ENCODE measurements at regions of chr19 and their contacts with region 1.

Region 1: GRCh38 chr19:45643024-45643926 is 4.1 kb upstream of the EML2 start:
- DNase-seq: peak; percentile 87 to 92
- ATAC-seq: peak; percentile 10 to 31 (median 14)
- H3K4me3 ChIP-seq: peak overlapping the region; percentile 9
- H3K4me3 Mint-ChIP-seq: peak overlapping the region; percentile 75
- H3K27ac ChIP-seq: peak overlapping the region; percentile 98
- H3K27ac Mint-ChIP-seq: peak overlapping the region; percentile 91 to 96
- H3K4me1 ChIP-seq: peaks cover 71% of the 10 kb centered on the region
- H3K4me1 Mint-ChIP-seq: peaks cover 47 to 71% of the 10 kb centered on the region in 2 donors
- H3K27me3 ChIP-seq: no peaks in the 10 kb centered on the region
- H3K27me3 Mint-ChIP-seq: no peaks in the 10 kb centered on the region
- CTCF ChIP-seq: peak; percentile 95

Region 2: GRCh38 chr19:45405435-45406225 is 237.6 kb before region 1 on chr19:
- intact Hi-C with region 1: loop called (anchors 10 kb)
- DNase-seq: peak; percentile 71 to 88
- ATAC-seq: peak; percentile 64 to 79 (median 70)
- H3K4me3 ChIP-seq: peak overlapping the region; percentile 67
- H3K4me3 Mint-ChIP-seq: peak overlapping the region; percentile 97
- H3K27ac ChIP-seq: peak overlapping the region; percentile 84
- H3K27ac Mint-ChIP-seq: peak overlapping the region; percentile 86 to 92
- H3K4me1 ChIP-seq: peaks cover 35% of the 10 kb centered on the region
- H3K4me1 Mint-ChIP-seq: peaks cover 33 to 37% of the 10 kb centered on the region in 2 donors
- H3K27me3 ChIP-seq: peaks cover 25% of the 10 kb centered on the region
- H3K27me3 Mint-ChIP-seq: peaks cover 10 to 14% of the 10 kb centered on the region in 2 donors
- CTCF ChIP-seq: no peak

Region 3: DNA sequence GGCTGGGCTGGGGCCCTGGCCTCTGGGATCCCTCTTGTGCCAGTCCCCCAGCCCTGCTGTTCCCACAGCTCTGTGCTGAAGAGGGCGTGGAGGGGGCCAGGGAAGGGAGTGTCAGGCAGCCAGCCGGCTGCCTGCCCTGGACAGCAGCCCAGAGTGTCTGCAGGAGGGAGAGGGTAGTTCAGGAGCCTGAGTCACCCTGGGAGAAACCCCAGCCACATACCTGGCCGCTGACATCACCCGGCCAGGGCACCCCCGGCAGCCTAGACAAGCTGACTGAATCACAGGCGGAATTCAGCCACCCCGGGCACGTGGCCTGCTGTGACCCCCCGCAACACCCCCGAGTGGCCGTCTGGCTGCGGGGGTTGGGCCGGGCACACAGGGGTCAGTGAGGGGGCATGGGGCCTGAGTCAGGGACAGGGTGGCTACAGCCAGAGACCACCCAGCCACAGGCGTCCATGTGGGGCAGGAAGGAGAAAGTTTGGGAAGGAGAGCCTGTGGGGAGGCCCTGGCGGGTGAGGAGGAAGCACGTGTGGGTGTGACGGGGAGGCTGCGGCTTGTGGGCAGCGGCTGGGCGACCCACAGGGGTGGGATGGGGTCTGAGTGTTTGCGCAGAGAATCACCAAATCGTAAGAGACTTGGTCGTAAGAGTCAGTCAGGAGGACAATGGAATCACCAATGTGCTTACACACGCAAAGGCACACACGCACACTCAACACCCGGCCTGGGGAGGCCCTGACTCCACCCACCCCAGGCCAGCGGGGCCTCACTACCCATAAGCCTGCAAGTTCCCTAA is 187.4 kb before region 1 on chr19:
- intact Hi-C with region 1: loop called (anchors 10 kb)
- DNase-seq: peak; percentile 84 to 88
- ATAC-seq: peak; percentile 60 to 77 (median 72)
- H3K4me3 ChIP-seq: no peak overlapping the region
- H3K4me3 Mint-ChIP-seq: peak overlapping the region; percentile 47
- H3K27ac ChIP-seq: peak overlapping the region; percentile 74
- H3K27ac Mint-ChIP-seq: peak overlapping the region; percentile 92 to 98
- H3K4me1 ChIP-seq: peaks cover 40% of the 10 kb centered on the region
- H3K4me1 Mint-ChIP-seq: peaks cover 42 to 52% of the 10 kb centered on the region in 2 donors
- H3K27me3 ChIP-seq: no peaks in the 10 kb centered on the region
- H3K27me3 Mint-ChIP-seq: peaks cover 0 to 4% of the 10 kb centered on the region in 2 donors
- CTCF ChIP-seq: no peak

Region 4: DNA sequence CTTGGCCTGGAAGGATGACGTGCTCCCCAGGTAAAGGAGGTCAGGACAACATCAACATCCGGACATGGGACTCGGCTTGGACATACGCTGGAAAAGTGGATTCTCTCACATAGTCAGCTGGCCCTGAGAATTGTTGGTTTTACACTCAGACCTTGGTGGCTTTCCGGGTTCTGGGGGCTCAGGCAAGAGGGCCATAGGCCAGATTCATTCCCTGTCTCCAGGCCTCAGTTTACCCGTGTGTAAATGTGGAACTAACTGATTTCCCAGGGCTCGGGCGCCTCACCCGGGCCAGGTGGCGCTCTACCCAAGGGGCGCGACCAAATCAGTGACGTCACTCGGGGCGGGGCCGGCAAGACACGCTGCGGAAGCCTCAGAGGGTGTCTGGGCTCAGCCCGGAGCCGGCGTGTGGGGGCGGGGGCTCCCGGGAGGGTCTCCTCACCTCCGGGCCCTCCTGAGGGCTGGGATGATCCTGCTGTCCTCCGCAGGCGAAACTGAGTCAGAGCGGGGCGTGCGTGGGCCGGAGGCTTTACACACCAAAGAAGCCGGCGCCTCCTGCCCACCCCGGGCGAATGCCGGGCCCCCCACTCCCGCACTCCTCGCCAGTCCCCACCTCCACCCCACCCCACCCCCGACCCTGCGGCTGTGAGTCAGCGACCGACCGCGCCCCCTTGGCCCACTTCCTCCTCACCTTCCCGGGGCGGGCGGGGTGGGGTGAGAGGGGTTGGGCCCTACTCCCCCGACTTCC is 136.9 kb before region 1 on chr19:
- intact Hi-C with region 1: loop called (anchors 1 kb)
- DNase-seq: peak; percentile 97 to 98
- ATAC-seq: peak; percentile 74 to 89 (median 78)
- H3K4me3 ChIP-seq: peak overlapping the region; percentile 98
- H3K4me3 Mint-ChIP-seq: peak overlapping the region; percentile 92
- H3K27ac ChIP-seq: peak overlapping the region; percentile 93
- H3K27ac Mint-ChIP-seq: peak overlapping the region; percentile 81 to 97
- H3K4me1 ChIP-seq: peaks cover 40% of the 10 kb centered on the region
- H3K4me1 Mint-ChIP-seq: peaks cover 28 to 40% of the 10 kb centered on the region in 2 donors
- H3K27me3 ChIP-seq: no peaks in the 10 kb centered on the region
- H3K27me3 Mint-ChIP-seq: no peaks in the 10 kb centered on the region
- CTCF ChIP-seq: peak; percentile 53

Region 5: DNA sequence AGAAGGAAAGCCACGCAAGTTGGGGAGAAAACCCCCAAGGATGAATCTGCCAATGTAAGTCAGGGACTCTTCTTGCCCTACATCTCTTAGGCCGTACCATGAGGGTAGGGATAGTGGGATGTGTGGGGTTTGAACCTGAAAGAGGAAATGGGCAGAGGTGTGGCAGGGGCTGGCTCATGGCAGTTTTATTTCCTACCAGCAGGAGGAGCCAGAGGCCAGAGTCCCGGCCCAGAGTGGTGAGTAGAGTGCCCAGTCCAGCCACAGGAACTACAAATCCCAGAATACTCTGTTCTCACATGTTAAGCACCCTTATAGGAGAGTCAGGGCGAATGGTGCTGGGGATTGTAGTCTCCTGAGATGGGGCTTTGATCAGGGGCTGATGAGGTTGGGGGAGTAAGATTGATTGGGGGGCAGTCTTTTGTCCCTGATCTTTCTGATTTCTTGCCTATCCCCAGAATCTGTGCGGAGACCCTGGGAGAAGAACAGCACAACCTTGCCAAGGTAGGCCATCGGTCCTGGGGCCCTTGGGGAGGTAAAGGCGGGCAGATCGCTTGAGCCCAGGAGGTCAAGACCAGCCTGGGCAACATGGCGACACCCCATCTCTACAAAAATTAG is 119.5 kb before region 1 on chr19:
- intact Hi-C with region 1: loop called (anchors 2 kb)
- DNase-seq: peak; percentile 70 to 90
- ATAC-seq: peak; percentile 99 to 100 (median 99)
- H3K4me3 ChIP-seq: no peak overlapping the region
- H3K4me3 Mint-ChIP-seq: no peak overlapping the region
- H3K27ac ChIP-seq: peak overlapping the region; percentile 13
- H3K27ac Mint-ChIP-seq: peak overlapping the region; percentile 75 to 78
- H3K4me1 ChIP-seq: peaks cover 19% of the 10 kb centered on the region
- H3K4me1 Mint-ChIP-seq: peaks cover 20 to 22% of the 10 kb centered on the region in 2 donors
- H3K27me3 ChIP-seq: no peaks in the 10 kb centered on the region
- H3K27me3 Mint-ChIP-seq: no peaks in the 10 kb centered on the region
- CTCF ChIP-seq: peak; percentile 75

Region 6: DNA sequence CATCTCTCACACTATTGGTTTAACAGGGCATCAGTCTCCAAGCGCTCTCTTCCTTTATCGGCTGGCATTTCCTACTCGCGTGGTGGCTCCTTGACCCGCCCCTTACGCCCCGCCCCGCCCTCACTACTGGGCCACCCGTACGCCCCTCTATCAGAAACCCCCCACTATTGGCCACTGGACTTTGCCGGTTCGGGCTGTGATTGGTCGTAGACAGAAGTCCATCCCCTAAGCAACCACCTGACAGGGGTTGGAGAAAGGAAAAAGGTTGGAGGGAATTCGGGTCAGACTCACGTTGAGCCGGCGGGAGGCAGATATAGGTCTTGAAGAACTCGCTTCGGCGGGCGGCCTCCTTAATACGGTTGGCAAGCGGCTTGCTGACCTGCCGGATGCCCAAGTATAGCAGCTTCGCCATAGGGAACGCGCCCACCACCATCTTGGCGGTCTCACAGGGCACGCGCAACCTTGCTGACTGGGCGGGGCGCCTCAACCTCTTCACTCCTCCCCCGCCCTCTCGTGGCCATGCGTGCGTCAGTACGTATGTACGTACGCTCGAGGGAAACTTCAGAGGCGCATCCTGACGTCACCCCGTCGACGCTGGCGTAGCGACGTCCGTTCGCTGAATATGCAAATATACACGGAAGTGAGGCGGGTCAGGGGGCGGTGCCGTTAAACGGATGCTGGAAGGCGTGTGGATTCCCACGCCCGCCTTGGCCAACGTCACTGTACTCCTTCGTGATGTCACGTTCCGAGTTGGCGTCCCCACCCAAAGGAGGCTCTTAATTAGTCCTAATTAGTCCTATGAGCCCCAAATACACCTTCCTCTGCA is 58.7 kb before region 1 on chr19 and contains the start of gene OPA3:
- intact Hi-C with region 1: loop called (anchors 1 kb)
- DNase-seq: peak; percentile 98 to 100
- ATAC-seq: peak; percentile 84 to 95 (median 84)
- H3K4me3 ChIP-seq: peak within 1 kb of the TSS; percentile 77
- H3K4me3 Mint-ChIP-seq: peak within 1 kb of the TSS; percentile 89
- H3K27ac ChIP-seq: peak within 1 kb of the TSS; percentile 96
- H3K27ac Mint-ChIP-seq: peak within 1 kb of the TSS; percentile 95 to 96
- H3K4me1 ChIP-seq: peaks cover 16% of the 10 kb centered on the region
- H3K4me1 Mint-ChIP-seq: peaks cover 14 to 33% of the 10 kb centered on the region in 2 donors
- H3K27me3 ChIP-seq: no peaks in the 10 kb centered on the region
- H3K27me3 Mint-ChIP-seq: peaks cover 4 to 6% of the 10 kb centered on the region in 2 donors
- CTCF ChIP-seq: no peak
- total RNA-seq, gene OPA3: 8.2 to 10.4 (median 9.0) TPM

Region 7: DNA sequence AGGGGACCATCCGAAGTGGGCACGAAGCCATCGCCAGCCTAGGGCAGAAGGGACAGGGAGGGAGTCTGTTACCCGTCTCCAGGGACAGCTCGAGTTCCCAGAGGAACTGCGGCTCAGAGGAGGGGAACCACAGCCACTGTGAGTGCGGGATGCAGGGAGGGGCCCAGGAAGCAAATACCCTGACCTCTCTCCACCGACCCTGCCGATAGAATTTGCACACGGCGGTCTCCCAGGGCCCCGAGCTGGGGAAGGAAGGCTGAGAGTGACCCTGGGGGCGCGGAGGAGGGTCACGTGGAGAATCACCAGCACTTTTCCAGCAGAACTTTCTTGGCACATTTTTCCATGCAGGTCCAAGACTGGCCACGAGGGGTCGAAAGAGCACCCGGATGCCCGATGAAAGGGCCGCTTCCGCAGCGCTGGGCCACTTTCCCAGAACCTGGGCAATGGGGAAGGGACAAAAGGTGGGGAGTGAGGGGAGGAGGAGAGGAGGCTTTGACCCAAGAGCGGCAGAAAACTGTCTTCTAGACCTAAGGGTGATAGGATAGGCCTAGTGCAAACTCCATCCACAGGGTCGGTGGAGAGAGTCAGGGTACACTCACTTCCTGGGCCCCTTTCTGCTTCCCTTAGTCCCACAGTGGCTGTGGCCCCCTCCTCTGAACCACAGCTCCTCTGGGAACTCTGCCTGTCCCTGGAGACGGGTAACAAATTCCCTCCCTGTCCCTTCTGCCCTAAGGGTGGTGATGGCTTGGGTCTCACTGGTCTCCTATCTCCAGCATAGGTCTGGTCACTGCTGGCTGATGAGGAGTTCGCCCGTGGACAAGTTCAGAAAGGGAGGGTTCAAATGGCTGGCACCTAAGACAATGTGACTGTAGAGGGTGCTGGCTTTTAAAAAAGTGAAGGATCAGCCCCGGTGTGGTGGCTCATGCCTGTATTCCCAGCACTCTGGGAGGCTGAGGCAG is 35.9 kb before region 1 on chr19:
- intact Hi-C with region 1: loop called (anchors 1 kb)
- DNase-seq: peak; percentile 43 to 71
- ATAC-seq: peak in 2 of 3 donors; percentile 73 to 81
- H3K4me3 ChIP-seq: no peak overlapping the region
- H3K4me3 Mint-ChIP-seq: no peak overlapping the region
- H3K27ac ChIP-seq: no peak overlapping the region
- H3K27ac Mint-ChIP-seq: peak overlapping the region in 1 of 2 donors; percentile 86
- H3K4me1 ChIP-seq: peaks cover 11% of the 10 kb centered on the region
- H3K4me1 Mint-ChIP-seq: peaks cover 5 to 12% of the 10 kb centered on the region in 2 donors
- H3K27me3 ChIP-seq: peaks cover 4% of the 10 kb centered on the region
- H3K27me3 Mint-ChIP-seq: peaks cover 11 to 13% of the 10 kb centered on the region in 2 donors
- CTCF ChIP-seq: peak; percentile 84

Region 8: DNA sequence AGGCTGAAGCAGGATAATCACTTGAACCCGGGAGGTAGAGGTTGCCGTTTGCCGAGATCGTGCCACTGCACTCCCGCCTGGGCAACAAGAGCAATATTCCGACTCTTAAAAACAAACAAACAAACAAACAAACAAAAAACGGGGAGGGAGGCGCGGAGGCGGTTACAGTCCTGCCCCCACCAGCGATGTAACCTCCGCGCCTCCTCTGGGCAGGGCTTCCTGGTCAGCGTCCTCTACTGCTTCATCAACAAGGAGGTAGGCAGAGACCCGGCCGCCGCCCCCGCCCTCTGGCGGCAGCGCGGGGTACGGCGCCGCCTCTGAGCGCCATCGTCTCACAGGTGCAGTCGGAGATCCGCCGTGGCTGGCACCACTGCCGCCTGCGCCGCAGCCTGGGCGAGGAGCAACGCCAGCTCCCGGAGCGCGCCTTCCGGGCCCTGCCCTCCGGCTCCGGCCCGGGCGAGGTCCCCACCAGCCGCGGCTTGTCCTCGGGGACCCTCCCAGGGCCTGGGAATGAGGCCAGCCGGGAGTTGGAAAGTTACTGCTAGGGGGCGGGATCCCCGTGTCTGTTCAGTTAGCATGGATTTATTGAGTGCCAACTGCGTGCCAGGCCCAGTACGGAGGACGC is 38.2 kb after region 1 on chr19:
- intact Hi-C with region 1: no loop called
- DNase-seq: peak; percentile 89 to 91
- ATAC-seq: peak; percentile 92 to 99 (median 95)
- H3K4me3 ChIP-seq: peak overlapping the region; percentile 23
- H3K4me3 Mint-ChIP-seq: peak overlapping the region; percentile 81
- H3K27ac ChIP-seq: no peak overlapping the region
- H3K27ac Mint-ChIP-seq: peak overlapping the region; percentile 7 to 86
- H3K4me1 ChIP-seq: peaks cover 30% of the 10 kb centered on the region
- H3K4me1 Mint-ChIP-seq: peaks cover 17 to 24% of the 10 kb centered on the region in 2 donors
- H3K27me3 ChIP-seq: peaks cover 11% of the 10 kb centered on the region
- H3K27me3 Mint-ChIP-seq: peaks cover 0 to 12% of the 10 kb centered on the region in 2 donors
- CTCF ChIP-seq: peak; percentile 94